ENCODE measurements at regions of chr19 and their contacts with region 1.

Region 1: GRCh38 chr19:42325273-42325895 is at the start of gene MEGF8:
- DNase-seq: peak; percentile 98 to 100
- H3K4me3 ChIP-seq: peak within 1 kb of the TSS; percentile 73 to 97 (median 88)
- H3K27ac ChIP-seq: peak within 1 kb of the TSS; percentile 70 to 87 (median 80)
- H3K4me1 ChIP-seq: peaks cover 25 to 56% (median 39%) of the 10 kb centered on the region in 4 donors
- H3K27me3 ChIP-seq: peaks cover 14 to 35% (median 17%) of the 10 kb centered on the region in 3 donors
- CTCF ChIP-seq: peak in 5 of 7 experiments; percentile 76 to 91 (median 86)
- EP300 ChIP-seq: no peak
- POLR2A ChIP-seq: no peak
- total RNA-seq, gene MEGF8: 12.3 to 46.3 (median 21.0) TPM

Region 2: GRCh38 chr19:42121656-42122069 is 203.7 kb before region 1 on chr19:
- intact Hi-C with region 1: loop called (anchors 10 kb)
- DNase-seq: peak in 1 of 2 donors; percentile 46
- H3K4me3 ChIP-seq: no peak overlapping the region
- H3K27ac ChIP-seq: peak overlapping the region in 3 of 5 donors; percentile 30 to 42 (median 39)
- H3K4me1 ChIP-seq: peaks cover 0 to 20% (median 4%) of the 10 kb centered on the region in 4 donors
- H3K27me3 ChIP-seq: peaks cover 0 to 42% (median 0%) of the 10 kb centered on the region in 3 donors
- CTCF ChIP-seq: no peak
- EP300 ChIP-seq: no peak
- POLR2A ChIP-seq: no peak

Region 3: DNA sequence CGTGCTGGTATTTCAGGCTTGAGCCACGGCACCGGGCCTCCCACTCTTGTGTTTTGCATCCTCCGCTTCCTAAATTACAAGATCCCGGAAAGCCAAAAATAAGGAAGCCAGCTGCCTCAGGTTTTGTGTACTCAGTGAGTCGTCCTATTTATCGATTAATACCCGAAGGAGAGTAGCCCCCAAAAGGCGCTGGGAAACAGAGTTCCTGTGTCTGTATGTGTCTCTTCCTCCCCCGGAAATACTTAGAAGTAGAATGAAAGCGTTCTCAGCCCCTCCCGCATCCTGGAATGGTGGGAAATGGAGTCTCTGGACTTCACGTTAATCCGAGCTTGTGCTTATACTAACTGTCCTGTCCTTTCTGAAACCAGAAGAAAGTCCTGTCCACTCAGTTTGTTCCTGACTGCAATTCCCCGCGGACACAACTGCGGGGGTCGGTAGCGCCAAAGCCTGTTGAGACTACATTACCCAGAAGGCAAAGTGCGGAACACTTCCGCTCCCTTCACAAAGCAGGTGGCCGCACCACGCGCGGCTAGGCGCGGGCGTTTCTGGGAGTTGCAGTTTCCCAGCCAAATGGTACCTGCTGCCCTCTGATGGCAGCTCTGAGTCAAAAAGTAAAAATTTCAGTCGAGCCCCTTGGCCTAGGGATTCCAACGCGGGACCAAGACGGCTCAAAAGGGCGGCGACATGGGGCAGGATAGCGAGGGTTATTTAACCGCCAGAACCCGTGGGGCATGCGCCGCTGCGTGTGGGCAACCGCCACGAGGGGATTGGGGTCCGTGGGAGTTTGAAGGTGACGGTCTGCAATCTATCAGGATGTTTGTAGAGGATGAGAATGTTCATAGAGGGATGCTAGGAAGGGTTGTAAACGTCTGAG is 80.8 kb before region 1 on chr19:
- intact Hi-C with region 1: no loop called
- DNase-seq: peak; percentile 92 to 98
- H3K4me3 ChIP-seq: peak overlapping the region; percentile 88 to 96 (median 92)
- H3K27ac ChIP-seq: peak overlapping the region; percentile 88 to 97 (median 94)
- H3K4me1 ChIP-seq: peaks cover 31 to 81% (median 59%) of the 10 kb centered on the region in 4 donors
- H3K27me3 ChIP-seq: no peaks in the 10 kb centered on the region
- CTCF ChIP-seq: peak in 5 of 7 experiments; percentile 18 to 78 (median 41)
- EP300 ChIP-seq: peak; percentile 21
- POLR2A ChIP-seq: no peak

Measured in stomach (tissue), 19 donors.